Natural killer cell (primary cell): ENCODE measurements at regions of chr4 and their contacts with region 1.

Region 1: DNA sequence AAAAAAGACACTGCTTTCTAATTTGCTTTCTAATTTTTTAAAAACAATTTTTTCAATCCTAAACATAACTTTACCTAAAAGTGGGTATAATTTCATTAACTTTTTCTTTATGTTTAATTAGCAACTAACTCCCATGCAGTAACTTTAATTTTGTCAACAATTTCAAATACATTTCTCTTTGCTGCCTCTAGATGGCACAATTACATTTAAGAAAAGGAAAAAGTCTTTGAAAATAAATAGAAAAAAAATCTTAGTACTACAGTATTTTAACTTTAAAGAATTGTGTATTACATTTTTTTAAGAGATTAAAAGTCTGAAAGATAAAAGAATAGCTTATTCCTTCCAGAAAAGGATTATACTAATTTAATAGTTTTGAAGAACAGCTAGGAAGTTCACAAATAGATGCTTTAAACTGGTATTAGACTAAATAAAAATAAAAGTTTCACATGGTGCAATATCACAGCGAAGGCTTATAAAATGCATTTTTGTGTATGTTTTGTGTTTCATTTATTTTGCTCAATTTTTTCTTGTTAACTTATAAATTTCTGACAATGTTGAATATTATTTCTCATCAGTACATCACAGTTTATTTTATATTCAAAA is 105.1 kb downstream of the ADGRA3 start:
- DNase-seq: peak in 1 of 2 donors; percentile 21
- ATAC-seq: no peak
- H3K4me3 ChIP-seq: no peak overlapping the region
- H3K4me3 Mint-ChIP-seq: no peak overlapping the region
- H3K27ac ChIP-seq: no peak overlapping the region
- H3K27ac Mint-ChIP-seq: no peak overlapping the region
- H3K4me1 ChIP-seq: no peaks in the 10 kb centered on the region
- H3K4me1 Mint-ChIP-seq: no peaks in the 10 kb centered on the region
- H3K27me3 ChIP-seq: no peaks in the 10 kb centered on the region
- H3K27me3 Mint-ChIP-seq: no peaks in the 10 kb centered on the region
- CTCF ChIP-seq: peak; percentile 86

Region 2: GRCh38 chr4:22607382-22607781 is 196.6 kb after region 1 on chr4:
- intact Hi-C with region 1: loop called (anchors 1 kb)
- DNase-seq: peak; percentile 26 to 61
- ATAC-seq: peak; percentile 88 to 100 (median 100)
- H3K4me3 ChIP-seq: no peak overlapping the region
- H3K4me3 Mint-ChIP-seq: no peak overlapping the region
- H3K27ac ChIP-seq: no peak overlapping the region
- H3K27ac Mint-ChIP-seq: peak overlapping the region in 1 of 2 donors; percentile 39
- H3K4me1 ChIP-seq: peaks cover 6% of the 10 kb centered on the region
- H3K4me1 Mint-ChIP-seq: peaks cover 24 to 35% of the 10 kb centered on the region in 2 donors
- H3K27me3 ChIP-seq: no peaks in the 10 kb centered on the region
- H3K27me3 Mint-ChIP-seq: peaks cover 0 to 2% of the 10 kb centered on the region in 2 donors
- CTCF ChIP-seq: peak; percentile 38